Activated CD4-positive, alpha-beta T cell treated with anti-CD3 and anti-CD28 coated beads, Interleukin-2, amount 10 ng/mL, durations not matched to agents 24 days and 14 days (primary cell): ENCODE measurements at regions of chr19 and their contacts with region 1.

Region 1: DNA sequence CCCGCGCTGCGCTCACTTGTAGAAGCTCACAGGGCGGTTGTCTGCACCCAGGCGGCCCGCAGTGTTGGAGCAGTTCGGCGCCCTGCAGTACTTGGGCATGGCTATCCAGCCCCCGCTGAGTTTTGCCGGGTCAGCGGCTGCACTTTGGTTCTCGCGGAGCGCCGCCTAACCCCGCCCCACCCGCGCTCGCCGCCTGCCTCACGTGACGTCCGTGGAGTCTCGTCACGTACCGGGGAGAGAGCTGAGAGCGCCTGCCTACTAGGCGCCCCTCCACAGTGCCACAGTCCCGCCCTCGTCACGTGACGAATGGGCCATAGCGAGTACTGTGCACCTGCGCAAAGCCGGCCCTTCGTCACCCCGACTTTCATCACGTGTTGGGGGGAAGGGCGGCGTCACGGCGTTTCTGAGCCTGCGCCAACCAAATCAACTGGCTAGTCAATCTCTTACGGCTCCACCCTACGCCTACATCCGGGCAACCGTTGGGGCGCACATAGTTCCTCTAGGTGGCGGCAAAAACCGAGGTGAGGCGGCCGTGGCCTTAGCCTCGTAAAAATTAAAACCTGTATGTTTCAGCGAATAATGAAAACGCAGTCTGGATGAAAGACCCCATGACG is at the start of gene THAP8:
- DNase-seq: peak; percentile 100
- H3K4me3 Mint-ChIP-seq: peak within 1 kb of the TSS; percentile 96
- H3K27ac Mint-ChIP-seq: peak within 1 kb of the TSS; percentile 98
- H3K4me1 Mint-ChIP-seq: peaks cover 35% of the 10 kb centered on the region
- H3K27me3 Mint-ChIP-seq: no peaks in the 10 kb centered on the region
- total RNA-seq, gene THAP8: 1.5 and 2.0 TPM in 2 replicates

Region 2: DNA sequence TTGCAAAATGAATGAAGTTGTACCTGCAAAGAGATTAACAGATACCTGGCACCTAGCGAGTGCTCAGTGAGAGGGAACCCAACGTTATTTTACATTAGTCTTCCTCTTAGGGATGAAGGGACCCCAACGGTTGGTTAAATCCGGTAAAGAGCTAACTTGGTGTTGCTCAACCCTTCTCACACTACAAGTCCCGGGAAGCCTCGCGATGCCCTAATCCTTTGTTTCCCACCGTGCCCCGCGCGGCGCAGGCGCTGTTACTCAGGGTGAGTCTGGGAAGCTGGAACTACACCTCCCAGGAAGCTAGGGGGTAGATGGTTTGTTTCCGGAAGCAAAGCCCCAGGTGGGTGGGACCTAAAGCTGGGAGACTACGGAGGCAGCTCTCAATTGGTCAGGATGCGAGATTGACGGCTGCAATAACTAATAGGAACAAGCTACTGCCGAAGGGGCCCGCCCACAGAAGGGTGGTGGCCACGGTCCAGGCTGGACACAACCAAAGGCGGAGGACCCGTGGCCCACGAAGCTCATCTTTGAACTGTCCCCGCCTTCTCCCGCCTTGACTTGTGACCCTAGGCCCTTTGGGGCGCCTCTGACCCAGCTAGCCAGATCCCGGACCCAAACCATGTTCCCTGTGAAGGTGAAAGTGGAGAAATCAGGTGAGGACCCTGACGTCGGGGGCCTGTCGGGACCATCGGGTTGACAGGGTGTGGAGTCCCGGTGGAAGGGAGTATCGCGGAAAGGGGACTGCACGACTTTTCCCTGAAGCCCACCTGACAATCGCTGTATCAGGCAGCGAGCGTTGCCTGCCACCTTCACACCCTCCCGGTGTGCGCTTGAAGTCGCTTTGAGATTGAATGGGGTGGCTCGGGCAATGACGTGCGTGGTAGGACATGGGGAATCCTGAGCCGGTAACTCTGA is 305.9 kb before region 1 on chr19 and contains the start of gene LIN37:
- intact Hi-C with region 1: loop called (anchors 5 kb)
- DNase-seq: peak; percentile 100
- H3K4me3 Mint-ChIP-seq: peak within 1 kb of the TSS; percentile 99
- H3K27ac Mint-ChIP-seq: peak within 1 kb of the TSS; percentile 95
- H3K4me1 Mint-ChIP-seq: peaks cover 37% of the 10 kb centered on the region
- H3K27me3 Mint-ChIP-seq: no peaks in the 10 kb centered on the region
- total RNA-seq, gene LIN37: 7.7 and 11.1 TPM in 2 replicates

Region 3: DNA sequence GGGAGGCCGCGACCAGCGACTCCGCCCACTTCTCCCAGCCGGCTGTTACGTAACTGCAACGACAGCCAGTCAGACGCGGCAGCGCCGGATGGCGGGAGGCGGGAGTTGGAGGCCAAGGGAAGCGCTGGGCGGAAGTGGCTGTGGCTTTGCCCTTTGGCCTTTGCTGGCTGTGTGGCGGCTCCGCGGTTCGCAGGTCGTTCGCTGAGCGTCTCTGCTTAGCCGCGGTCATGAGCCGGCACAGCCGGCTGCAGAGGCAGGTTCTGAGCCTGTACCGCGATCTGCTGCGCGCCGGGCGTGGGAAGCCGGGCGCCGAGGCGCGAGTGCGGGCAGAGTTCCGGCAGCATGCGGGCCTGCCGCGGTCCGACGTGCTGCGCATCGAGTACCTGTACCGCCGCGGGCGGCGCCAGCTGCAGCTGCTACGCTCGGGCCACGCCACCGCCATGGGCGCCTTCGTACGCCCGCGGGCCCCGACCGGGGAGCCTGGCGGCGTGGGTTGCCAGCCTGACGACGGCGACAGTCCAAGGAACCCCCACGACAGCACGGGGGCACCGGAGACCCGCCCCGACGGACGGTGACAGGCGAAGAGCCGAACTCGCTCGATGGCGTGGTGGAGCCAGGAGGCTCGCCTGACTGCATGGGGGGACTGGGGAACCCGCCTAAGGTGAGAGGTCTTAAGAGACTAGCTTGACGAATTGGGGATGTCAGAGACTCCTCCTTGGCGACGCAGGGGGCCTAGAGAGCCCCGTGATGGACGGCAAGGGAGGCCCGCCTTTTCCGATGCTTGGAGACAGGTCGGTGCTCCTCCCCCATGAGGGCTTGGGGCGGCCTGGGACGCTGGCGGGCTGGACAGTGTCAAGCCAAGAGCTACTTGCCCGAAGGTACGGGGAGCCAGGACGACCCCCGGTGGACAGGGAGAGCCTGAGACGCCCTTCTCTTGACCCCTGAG is 58.9 kb before region 1 on chr19 and contains the start of gene SDHAF1:
- intact Hi-C with region 1: loop called (anchors 5 kb)
- DNase-seq: peak; percentile 98
- H3K4me3 Mint-ChIP-seq: peak within 1 kb of the TSS; percentile 92
- H3K27ac Mint-ChIP-seq: peak within 1 kb of the TSS; percentile 92
- H3K4me1 Mint-ChIP-seq: peaks cover 31% of the 10 kb centered on the region
- H3K27me3 Mint-ChIP-seq: no peaks in the 10 kb centered on the region
- total RNA-seq, gene SDHAF1: 21.4 and 23.1 TPM in 2 replicates

Region 4: DNA sequence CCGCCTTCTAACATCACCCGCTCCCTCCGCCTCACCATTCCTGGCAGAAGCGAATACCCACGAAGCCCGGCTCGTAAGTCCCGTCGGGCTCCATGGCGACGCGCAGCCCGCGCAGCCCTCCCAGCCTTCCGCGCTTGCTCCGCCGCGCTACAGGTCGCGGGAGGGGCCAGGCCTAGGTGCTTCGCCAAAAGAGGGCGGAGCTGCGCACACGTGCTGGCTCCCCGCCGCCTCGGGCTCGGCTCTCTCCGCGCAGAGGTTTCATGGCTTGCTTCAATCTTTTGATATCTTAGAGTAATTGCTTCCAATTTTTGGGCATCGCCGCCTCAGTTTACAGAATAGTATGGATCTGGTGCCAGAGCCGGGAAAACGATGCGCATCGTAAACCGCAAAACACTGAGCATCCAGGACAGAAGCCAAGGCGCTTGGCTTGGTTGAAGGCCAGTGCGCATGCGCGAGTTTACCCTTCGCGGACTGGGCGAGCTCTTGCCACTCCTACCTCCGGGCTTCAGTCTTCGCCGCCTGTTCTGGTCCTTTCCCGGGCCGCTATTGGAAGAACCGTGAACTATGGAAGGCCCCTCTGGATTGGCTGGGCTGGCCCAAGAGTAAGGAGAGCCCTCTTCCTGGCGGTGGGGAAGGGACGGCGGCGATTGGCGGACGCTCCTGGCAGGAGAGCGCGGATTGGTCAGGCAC is 60.7 kb after region 1 on chr19 and contains the start of gene POLR2I:
- intact Hi-C with region 1: loop called (anchors 1 kb)
- DNase-seq: peak; percentile 99
- H3K4me3 Mint-ChIP-seq: peak within 1 kb of the TSS; percentile 94
- H3K27ac Mint-ChIP-seq: peak within 1 kb of the TSS; percentile 95
- H3K4me1 Mint-ChIP-seq: peaks cover 29% of the 10 kb centered on the region
- H3K27me3 Mint-ChIP-seq: peaks cover 4% of the 10 kb centered on the region
- total RNA-seq, gene POLR2I: 83.4 and 86.3 TPM in 2 replicates